ENCODE measurements at regions of chr3 and their contacts with region 1.

Region 1: DNA sequence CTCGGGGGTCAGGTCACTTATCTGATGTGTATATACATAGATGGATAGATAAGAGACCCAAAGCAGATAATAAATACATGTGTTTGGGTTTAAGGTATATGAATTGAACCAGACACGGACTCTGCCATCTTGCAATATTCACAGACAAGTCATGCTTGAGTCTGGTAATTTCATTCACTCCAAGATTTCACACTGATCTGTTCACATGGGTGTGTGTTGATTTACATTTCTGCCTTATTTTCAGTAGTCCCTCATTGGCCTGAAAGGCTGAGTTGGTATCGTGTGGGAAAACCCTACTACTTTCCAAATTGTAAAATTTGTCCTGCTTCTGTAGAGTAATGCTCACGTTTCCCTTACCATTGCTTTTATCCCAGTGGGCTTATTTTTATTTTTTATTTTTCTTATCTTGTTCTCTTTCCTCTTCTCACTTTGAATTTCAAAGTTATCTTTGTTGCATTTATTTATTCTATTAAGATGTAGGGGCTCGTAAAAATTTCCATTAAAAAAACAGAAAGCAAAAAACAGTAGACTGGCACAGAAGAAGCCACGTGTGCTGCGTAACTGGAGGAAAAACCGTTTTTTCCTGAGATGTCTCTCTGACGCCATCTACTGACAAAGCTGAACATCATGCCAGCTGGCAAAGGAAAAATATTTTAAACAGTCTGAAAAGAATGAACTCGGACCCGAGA is 10.8 kb upstream of the MFSD1 start:
- DNase-seq: no peak
- ATAC-seq: no peak
- H3K4me3 ChIP-seq: peak overlapping the region in 3 of 4 donors; percentile 10 to 29 (median 14)
- H3K27ac ChIP-seq: no peak overlapping the region
- H3K4me1 ChIP-seq: peaks cover 0 to 4% of the 10 kb centered on the region in 2 donors
- H3K27me3 ChIP-seq: no peaks in the 10 kb centered on the region
- CTCF ChIP-seq: peak; percentile 34 to 73 (median 58)
- POLR2A ChIP-seq: no peak

Region 2: DNA sequence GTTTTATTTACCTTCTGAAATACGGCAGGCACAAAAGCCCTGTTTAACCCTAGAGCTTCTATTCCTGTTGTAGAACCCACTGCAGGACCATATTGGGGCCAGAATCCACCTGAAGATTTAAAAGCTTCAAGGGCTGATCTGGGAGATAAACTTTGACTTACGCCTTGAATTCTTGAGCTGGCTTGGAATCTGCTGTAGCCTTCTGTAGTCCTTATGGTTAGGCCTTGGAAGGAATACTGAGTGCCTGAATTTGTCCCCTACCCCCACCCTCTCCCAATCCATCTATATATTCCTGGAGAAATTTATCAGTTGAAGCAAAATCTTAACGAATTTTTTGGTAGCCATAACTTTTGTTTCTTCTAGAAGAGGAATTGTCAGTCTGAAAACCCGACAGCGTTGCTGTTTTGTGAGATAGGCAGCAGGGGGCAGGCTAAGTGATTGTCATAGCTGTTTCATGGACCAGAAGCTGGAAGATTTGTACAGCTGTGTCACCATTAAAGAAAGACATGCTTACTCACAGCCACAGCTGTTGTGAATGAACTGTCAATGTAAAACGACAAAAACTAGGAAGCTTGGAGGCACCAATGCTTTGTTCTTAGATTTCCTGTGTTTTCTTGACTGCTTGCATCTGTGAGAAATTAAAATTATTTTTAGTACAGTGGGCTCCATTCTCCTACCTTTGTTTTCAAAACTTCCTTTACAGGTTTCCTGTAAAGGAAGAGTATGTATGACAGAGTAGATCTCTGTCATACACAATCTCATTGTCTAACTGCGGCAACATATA is 131.4 kb before region 1 on chr3:
- in situ Hi-C with region 1: loop called in 3 of 4 experiments (anchors 5 to 25 kb)
- intact Hi-C with region 1: loop called (anchors 5 kb)
- DNase-seq: peak in 1 of 2 donors; percentile 26
- ATAC-seq: peak; percentile 36 to 64
- H3K4me3 ChIP-seq: no peak overlapping the region
- H3K27ac ChIP-seq: peak overlapping the region in 3 of 4 donors; percentile 22 to 57 (median 50)
- H3K4me1 ChIP-seq: no peaks in the 10 kb centered on the region
- H3K27me3 ChIP-seq: no peaks in the 10 kb centered on the region
- CTCF ChIP-seq: peak in 4 of 5 experiments; percentile 14 to 53 (median 44)
- POLR2A ChIP-seq: no peak

Region 3: GRCh38 chr3:158847885-158848284 is 56.8 kb after region 1 on chr3:
- in situ Hi-C with region 1: no loop called
- intact Hi-C with region 1: no loop called
- DNase-seq: no peak
- ATAC-seq: no peak
- H3K4me3 ChIP-seq: no peak overlapping the region
- H3K27ac ChIP-seq: no peak overlapping the region
- H3K4me1 ChIP-seq: no peaks in the 10 kb centered on the region
- H3K27me3 ChIP-seq: no peaks in the 10 kb centered on the region
- CTCF ChIP-seq: no peak
- POLR2A ChIP-seq: no peak

Measured in gastrocnemius medialis (tissue), 4 donors.